Activated CD4-positive, alpha-beta T cell treated with anti-CD3 and anti-CD28 coated beads for 36 hours (primary cell): ENCODE measurements at regions of chr5 and their contacts with region 1.

Region 1: DNA sequence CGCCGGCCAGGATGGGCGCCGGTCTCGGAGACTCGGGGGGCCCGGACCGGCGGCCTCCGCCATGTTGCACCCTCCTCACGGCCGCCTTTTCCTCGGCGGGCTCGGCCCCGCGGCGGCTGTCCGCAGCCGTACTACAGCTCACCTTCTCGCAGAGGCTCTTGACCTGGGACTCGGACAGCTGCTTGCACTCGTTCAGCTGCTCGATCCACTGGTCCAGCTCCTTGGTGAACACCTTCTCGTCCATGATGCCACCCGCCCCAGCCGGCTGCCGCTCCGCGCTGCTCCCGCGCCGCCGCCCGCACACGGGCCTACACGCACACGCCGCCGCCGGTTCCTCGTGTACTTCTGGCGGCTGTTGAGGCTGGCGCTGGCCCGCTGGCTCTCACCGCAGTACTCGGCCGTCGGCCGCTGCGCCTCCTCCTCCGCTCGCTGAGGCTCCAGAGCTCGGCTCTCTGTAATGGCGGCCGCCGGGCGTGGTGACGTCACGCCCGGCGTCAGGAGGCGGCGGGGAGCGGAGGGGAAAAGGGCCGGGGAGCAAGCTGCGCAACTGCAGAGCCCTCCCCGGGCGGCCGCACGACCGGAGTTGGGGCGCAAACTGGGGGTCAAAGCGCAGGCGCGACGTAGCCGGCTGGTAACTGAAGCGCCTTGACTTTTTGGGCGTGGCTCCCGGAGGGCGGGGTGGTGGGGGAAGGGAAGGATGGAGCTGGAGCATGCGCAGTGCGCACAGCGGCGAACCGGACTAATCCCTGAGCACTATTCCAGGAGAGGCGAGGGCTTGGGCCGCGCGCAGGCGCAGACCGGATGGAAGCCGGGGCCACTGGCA is at the start of gene PPP2CA:
- DNase-seq: peak; percentile 99
- ATAC-seq: peak; percentile 88
- H3K4me3 Mint-ChIP-seq: peak within 1 kb of the TSS; percentile 97
- H3K27ac Mint-ChIP-seq: peak within 1 kb of the TSS; percentile 98
- H3K4me1 Mint-ChIP-seq: peaks cover 47% of the 10 kb centered on the region
- H3K27me3 Mint-ChIP-seq: no peaks in the 10 kb centered on the region
- total RNA-seq, gene PPP2CA: 148 to 154 TPM

Region 2: DNA sequence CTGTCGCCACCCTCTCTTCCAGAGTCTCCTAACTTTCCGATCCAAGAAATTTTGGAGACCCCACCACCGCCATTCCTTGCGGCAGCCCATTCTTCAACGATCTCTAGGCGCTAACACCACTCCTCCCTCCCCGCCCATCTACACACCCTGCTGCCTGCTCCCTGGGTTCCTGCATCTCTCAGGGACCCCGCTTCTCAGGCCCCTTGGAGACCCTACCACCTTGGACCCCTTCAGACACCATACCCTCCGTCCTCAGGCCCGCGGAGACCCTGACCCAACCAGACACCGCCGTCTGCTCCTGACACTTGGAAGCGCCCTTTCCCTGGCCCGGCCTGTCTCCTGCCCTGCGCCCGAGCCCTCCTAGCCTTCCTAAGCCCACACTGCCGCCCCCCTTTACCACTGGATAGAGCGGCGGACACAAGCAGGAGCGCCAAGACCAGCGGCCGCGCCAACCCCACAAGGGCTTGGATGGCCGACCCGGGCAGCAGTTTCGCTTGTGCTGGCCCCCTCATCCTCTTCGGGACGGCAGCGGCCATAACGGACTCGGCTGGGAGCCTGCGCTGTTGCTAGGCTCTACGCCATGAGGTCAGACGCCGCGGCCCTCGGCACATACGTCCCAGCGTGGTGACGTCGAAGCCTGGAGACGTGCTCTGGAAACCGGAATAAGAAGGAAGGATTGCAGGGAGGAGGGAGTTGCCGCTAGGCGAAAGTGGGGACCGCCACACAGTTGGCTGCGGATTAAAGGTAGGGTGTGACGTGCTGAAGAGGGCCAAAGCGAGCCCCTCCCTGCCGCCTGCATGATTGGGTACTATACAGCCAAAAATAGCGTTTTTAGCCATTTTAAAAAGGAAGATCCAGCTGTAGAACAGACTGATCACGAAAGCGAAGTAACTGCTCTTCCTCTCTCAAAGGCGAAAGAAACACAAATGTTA is 257.5 kb before region 1 on chr5 and contains the start of gene C5orf15:
- CTCF ChIA-PET with region 1: no interaction called
- POLR2A ChIA-PET with region 1: no interaction called
- intact Hi-C with region 1: loop called in 1 of 2 experiments (anchors 1 kb)
- DNase-seq: peak; percentile 97
- ATAC-seq: peak; percentile 97
- H3K4me3 Mint-ChIP-seq: peak within 1 kb of the TSS; percentile 94
- H3K27ac Mint-ChIP-seq: peak within 1 kb of the TSS; percentile 90
- H3K4me1 Mint-ChIP-seq: peaks cover 51% of the 10 kb centered on the region
- H3K27me3 Mint-ChIP-seq: no peaks in the 10 kb centered on the region
- total RNA-seq, gene C5orf15: 28.7 to 38.7 TPM

Region 3: DNA sequence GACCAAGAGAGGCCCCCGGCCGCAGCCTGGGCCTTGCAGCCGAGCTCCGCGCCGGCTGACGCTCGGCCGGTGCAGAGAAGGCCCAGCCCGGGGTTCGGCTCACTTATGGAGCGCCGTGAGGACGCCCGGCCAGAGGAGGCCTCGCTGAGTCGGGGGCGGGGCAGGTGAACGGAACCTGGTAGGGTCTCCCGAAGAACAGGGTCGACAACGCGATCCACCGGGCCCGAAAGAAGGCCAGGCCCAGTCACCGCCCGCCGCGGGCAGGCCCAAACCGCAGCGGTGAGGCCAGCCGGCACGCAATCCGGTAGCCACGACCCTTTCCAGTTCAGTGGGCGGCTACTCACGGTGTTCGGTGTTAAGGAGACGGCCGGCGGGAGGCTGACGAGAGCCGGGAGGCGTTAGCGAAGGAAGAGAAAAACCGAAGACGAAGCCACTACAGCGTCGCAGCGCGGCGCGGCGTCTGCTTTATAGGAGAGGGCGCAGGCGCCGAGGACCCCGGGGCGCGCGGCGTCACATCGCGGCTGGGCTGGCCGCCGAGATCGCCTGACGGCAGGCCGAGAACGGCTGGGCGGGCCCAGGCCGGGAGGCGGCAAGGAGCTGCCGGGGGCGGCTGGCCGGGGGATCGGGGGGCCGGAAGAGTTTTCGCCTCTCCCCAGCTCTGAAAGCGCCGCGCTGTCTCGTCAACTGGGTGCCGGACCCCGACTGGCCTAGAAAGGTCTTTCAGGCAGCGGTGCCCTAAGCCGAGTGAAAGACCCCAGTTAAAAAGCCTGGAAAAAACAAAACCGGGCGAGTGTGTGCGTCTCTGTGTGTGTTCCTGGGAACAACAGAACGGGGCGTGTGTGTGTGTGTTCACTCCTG is 49.1 kb before region 1 on chr5 and contains the start of gene SKP1:
- CTCF ChIA-PET with region 1: interaction called, 5 read pairs
- POLR2A ChIA-PET with region 1: interaction called, 29 read pairs
- intact Hi-C with region 1: loop called (anchors 1 kb)
- DNase-seq: peak; percentile 91
- ATAC-seq: peak; percentile 85
- H3K4me3 Mint-ChIP-seq: peak within 1 kb of the TSS; percentile 98
- H3K27ac Mint-ChIP-seq: peak within 1 kb of the TSS; percentile 95
- H3K4me1 Mint-ChIP-seq: peaks cover 32% of the 10 kb centered on the region
- H3K27me3 Mint-ChIP-seq: no peaks in the 10 kb centered on the region
- total RNA-seq, gene SKP1: 218 to 265 TPM

Region 4: GRCh38 chr5:134247825-134248224 is 22.0 kb after region 1 on chr5:
- CTCF ChIA-PET with region 1: no interaction called
- POLR2A ChIA-PET with region 1: no interaction called
- intact Hi-C with region 1: no loop called
- DNase-seq: no peak
- ATAC-seq: no peak
- H3K4me3 Mint-ChIP-seq: no peak overlapping the region
- H3K27ac Mint-ChIP-seq: no peak overlapping the region
- H3K4me1 Mint-ChIP-seq: no peaks in the 10 kb centered on the region
- H3K27me3 Mint-ChIP-seq: no peaks in the 10 kb centered on the region

Region 5: GRCh38 chr5:134432677-134433359 is 207.0 kb after region 1 on chr5:
- CTCF ChIA-PET with region 1: no interaction called
- POLR2A ChIA-PET with region 1: no interaction called
- intact Hi-C with region 1: no loop called
- DNase-seq: no peak
- ATAC-seq: no peak
- H3K4me3 Mint-ChIP-seq: no peak overlapping the region
- H3K27ac Mint-ChIP-seq: peak overlapping the region; percentile 58
- H3K4me1 Mint-ChIP-seq: peaks cover 35% of the 10 kb centered on the region
- H3K27me3 Mint-ChIP-seq: no peaks in the 10 kb centered on the region

Region 6: DNA sequence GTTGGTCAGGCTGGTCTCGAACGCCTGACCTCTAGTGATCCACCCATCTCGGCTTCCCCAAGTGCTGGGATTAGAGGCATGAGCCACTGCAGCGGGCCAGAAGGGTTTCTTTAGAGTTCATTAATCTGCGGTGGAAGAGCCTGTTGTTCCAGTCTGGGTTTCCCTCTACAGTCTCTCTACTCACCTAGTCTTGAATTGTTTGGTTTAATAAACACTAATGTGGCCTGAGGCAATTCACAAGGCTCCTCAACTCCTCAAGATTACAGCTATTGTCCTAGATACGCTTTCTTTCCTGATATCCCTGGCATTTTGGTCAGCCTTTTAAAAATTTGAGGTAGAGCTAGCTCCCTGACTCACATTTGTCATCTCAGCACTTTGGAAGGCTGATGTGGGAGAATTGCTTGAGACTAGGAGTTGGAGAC is 411.3 kb after region 1 on chr5:
- CTCF ChIA-PET with region 1: no interaction called
- POLR2A ChIA-PET with region 1: no interaction called
- intact Hi-C with region 1: loop called in 1 of 2 experiments (anchors 1 kb)
- DNase-seq: no peak
- ATAC-seq: no peak
- H3K4me3 Mint-ChIP-seq: no peak overlapping the region
- H3K27ac Mint-ChIP-seq: no peak overlapping the region
- H3K4me1 Mint-ChIP-seq: peaks cover 6% of the 10 kb centered on the region
- H3K27me3 Mint-ChIP-seq: no peaks in the 10 kb centered on the region

Region 7: GRCh38 chr5:134758504-134759341 is 532.9 kb after region 1 on chr5 and contains the start of gene DDX46:
- CTCF ChIA-PET with region 1: no interaction called
- POLR2A ChIA-PET with region 1: interaction called, 3 read pairs
- intact Hi-C with region 1: loop called in 1 of 2 experiments (anchors 1 kb)
- DNase-seq: peak; percentile 98
- ATAC-seq: peak; percentile 99
- H3K4me3 Mint-ChIP-seq: peak within 1 kb of the TSS; percentile 94
- H3K27ac Mint-ChIP-seq: peak within 1 kb of the TSS; percentile 89
- H3K4me1 Mint-ChIP-seq: peaks cover 29% of the 10 kb centered on the region
- H3K27me3 Mint-ChIP-seq: no peaks in the 10 kb centered on the region
- total RNA-seq, gene DDX46: 63.5 to 86.7 TPM

Region 8: DNA sequence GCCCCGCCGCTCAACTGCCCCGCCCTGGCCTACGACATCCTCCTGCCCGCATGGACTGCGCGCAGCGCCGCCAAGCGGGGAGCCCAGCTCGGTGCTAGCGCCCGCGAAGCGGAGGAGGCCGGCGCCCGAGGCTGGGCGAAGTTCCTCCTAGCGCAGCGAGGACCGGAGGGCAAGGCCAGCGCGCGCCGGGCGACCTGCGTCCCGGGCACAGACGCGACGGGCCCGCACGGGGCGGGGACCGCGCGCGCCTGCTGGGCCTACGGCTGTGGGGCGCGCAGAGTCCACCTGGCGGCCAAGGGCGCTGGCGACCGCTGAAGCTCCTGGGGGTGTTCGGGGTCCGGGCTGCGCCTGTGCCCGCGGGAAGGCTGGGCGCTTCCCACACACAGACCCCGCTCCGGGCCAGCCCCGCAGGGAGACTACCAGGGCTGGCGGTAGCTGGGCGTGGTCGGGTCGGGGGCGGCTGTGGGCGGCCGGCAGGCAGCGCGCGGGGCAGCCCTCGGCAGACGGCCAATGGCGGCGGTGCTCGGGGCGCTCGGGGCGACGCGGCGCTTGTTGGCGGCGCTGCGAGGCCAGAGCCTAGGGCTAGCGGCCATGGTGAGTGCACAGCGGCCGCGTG is 678.9 kb after region 1 on chr5 and contains the start of gene PCBD2:
- CTCF ChIA-PET with region 1: no interaction called
- POLR2A ChIA-PET with region 1: no interaction called
- intact Hi-C with region 1: loop called in 1 of 2 experiments (anchors 1 kb)
- DNase-seq: peak; percentile 97
- ATAC-seq: peak; percentile 89
- H3K4me3 Mint-ChIP-seq: peak within 1 kb of the TSS; percentile 95
- H3K27ac Mint-ChIP-seq: peak within 1 kb of the TSS; percentile 98
- H3K4me1 Mint-ChIP-seq: peaks cover 17% of the 10 kb centered on the region
- H3K27me3 Mint-ChIP-seq: no peaks in the 10 kb centered on the region
- total RNA-seq, gene PCBD2: 10.0 to 12.8 TPM